Heart left ventricle (tissue), 16 donors: ENCODE measurements at regions of chr18 and their contacts with region 1.

Region 1: GRCh38 chr18:59697236-59697932 is at the start of gene CCBE1:
- DNase-seq: peak; percentile 20 to 80 (median 53)
- ATAC-seq: peak in 3 of 4 donors; percentile 81 to 92 (median 85)
- H3K4me3 ChIP-seq: peak within 1 kb of the TSS; percentile 12 to 63 (median 52)
- H3K27ac ChIP-seq: peak within 1 kb of the TSS in 1 of 12 donors; percentile 86
- H3K4me1 ChIP-seq: peaks cover 0 to 18% (median 10%) of the 10 kb centered on the region in 12 donors
- H3K27me3 ChIP-seq: peaks cover 0 to 71% (median 19%) of the 10 kb centered on the region in 9 donors
- CTCF ChIP-seq: peak; percentile 61 to 91 (median 77)
- POLR2A ChIP-seq: no peak
- total RNA-seq, gene CCBE1: 0.20 to 6.3 (median 0.74) TPM

Region 2: GRCh38 chr18:59268721-59269562 is 428.4 kb before region 1 on chr18:
- intact Hi-C with region 1: no loop called
- DNase-seq: peak in 1 of 5 donors; percentile 19
- ATAC-seq: peak in 3 of 4 donors; percentile 57 to 69 (median 65)
- H3K4me3 ChIP-seq: peak overlapping the region in 7 of 12 donors; percentile 23 to 33 (median 31)
- H3K27ac ChIP-seq: no peak overlapping the region
- H3K4me1 ChIP-seq: peaks cover 0 to 54% (median 22%) of the 10 kb centered on the region in 12 donors
- H3K27me3 ChIP-seq: peaks cover 79 to 100% (median 98%) of the 10 kb centered on the region in 9 donors
- CTCF ChIP-seq: peak in 4 of 12 donors; percentile 10 to 39 (median 14)
- POLR2A ChIP-seq: no peak

Region 3: DNA sequence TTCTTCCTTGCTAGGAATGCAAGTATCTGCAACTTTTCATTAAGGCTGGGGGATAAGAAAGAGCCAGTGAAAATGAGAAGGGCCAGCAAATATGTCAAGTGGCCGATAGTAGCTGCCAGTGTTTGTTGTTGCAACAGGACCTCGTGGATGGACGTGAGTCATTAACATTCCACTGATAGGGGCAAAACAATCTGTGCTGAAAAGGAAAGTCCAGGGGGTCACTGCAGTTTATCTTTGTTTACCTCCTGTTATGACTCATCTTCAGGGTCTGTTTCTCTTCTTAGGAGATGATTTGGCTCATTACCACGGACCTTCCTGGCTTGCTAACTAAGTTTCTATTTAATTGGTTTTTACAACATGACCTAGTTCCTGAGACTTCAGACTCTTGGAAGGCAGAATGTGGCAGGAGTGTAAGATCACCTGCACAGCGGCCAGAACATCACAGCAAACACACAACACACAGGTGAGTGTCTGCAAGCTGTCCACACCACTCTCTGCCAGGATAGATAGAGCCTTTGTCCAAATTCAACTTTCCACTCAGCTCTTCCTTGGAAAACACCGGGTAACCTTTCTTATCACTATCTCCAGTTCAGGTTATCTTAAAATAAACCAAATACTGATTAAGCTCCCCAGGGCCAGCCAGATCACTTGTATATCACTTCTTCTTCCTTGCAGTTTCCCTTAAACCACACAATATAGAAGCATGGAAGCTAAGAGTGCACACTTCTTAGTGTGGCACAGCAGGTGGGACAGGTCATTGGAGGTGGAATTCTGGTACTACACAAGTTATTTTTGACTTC is 180.8 kb before region 1 on chr18:
- intact Hi-C with region 1: loop called in 1 of 10 experiments (anchors 5 kb)
- DNase-seq: peak in 4 of 5 donors; percentile 52 to 67 (median 62)
- ATAC-seq: peak; percentile 89
- H3K4me3 ChIP-seq: no peak overlapping the region
- H3K27ac ChIP-seq: peak overlapping the region in 11 of 12 donors; percentile 15 to 89 (median 69)
- H3K4me1 ChIP-seq: peaks cover 0 to 46% (median 20%) of the 10 kb centered on the region in 12 donors
- H3K27me3 ChIP-seq: no peaks in the 10 kb centered on the region
- CTCF ChIP-seq: no peak
- POLR2A ChIP-seq: no peak

Region 4: DNA sequence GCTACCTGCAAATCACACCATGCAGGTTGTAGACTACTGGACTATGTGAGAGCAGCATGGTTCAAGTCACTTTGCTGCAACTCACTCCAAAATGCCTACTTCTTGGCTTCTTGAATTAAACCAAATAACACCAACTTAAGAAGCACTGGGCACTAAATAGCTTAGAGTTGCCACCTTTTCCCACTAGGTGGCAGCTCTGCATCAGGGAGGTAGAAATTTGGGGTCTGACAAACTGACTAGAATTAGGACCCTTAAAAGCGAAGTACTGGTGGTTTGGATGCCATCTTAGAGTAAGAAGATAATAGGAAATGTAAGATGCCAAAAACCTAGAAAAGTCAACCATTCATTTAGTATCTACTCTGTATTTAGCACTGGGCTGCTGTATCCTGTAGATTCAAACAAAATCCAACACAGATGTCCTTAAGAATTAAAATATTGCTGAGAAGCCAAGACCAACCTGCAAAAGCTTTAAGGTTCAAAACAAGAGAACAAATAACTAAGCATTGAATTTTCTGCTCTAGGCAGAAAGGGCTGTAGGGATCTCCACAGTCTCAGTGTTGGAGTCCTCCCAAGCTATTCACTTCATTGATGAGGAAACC is 65.7 kb before region 1 on chr18:
- intact Hi-C with region 1: loop called in 1 of 10 experiments (anchors 5 kb)
- DNase-seq: no peak
- ATAC-seq: no peak
- H3K4me3 ChIP-seq: no peak overlapping the region
- H3K27ac ChIP-seq: peak overlapping the region in 1 of 12 donors; percentile 80
- H3K4me1 ChIP-seq: peaks cover 0 to 6% (median 0%) of the 10 kb centered on the region in 12 donors
- H3K27me3 ChIP-seq: no peaks in the 10 kb centered on the region
- CTCF ChIP-seq: peak; percentile 36 to 65 (median 48)
- POLR2A ChIP-seq: no peak

Region 5: GRCh38 chr18:59783138-59783537 is 85.8 kb after region 1 on chr18:
- intact Hi-C with region 1: loop called in 1 of 10 experiments (anchors 10 kb)
- DNase-seq: no peak
- ATAC-seq: peak in 2 of 4 donors; percentile 11 to 43
- H3K4me3 ChIP-seq: no peak overlapping the region
- H3K27ac ChIP-seq: no peak overlapping the region
- H3K4me1 ChIP-seq: peaks cover 0 to 2% (median 0%) of the 10 kb centered on the region in 12 donors
- H3K27me3 ChIP-seq: peaks cover 0 to 6% (median 0%) of the 10 kb centered on the region in 9 donors
- CTCF ChIP-seq: peak in 11 of 12 donors; percentile 15 to 53 (median 29)
- POLR2A ChIP-seq: no peak

Region 6: DNA sequence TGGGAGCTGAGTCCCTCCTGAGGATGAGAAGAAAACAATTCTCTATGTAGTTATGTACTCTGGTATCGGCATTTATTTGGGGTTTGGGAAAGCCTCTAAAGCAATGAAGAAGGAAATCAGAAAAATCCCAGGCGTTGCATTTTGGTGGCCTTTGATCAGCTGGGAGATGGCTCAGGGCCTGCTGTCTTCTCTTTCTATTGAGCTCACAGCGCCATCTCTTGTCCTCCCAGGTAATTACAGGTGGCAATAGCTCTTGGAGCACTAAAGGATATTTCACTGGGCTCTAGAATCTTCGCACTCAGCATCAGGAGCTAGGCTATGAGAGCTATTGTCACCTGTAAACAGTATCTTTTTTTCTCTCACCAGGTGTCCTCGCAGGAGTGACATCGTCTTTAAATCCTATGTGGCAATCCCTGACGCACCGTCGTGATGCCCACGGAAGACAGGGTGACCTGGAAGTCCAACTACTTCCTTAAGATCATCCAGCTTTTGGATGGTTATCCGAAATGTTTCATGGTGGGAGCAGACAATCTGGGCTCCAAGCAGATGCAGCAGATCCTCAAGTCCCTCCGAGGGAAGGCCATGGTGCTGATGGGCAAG is 126.3 kb after region 1 on chr18:
- intact Hi-C with region 1: loop called in 5 of 10 experiments (anchors 5 to 10 kb)
- DNase-seq: peak in 4 of 5 donors; percentile 46 to 62 (median 58)
- ATAC-seq: peak; percentile 32 to 80 (median 74)
- H3K4me3 ChIP-seq: no peak overlapping the region
- H3K27ac ChIP-seq: no peak overlapping the region
- H3K4me1 ChIP-seq: peaks cover 0 to 3% (median 0%) of the 10 kb centered on the region in 12 donors
- H3K27me3 ChIP-seq: peaks cover 0 to 7% (median 0%) of the 10 kb centered on the region in 9 donors
- CTCF ChIP-seq: peak; percentile 63 to 83 (median 76)
- POLR2A ChIP-seq: no peak